ENCODE measurements at regions of chr5 and their contacts with region 1.

Region 1: DNA sequence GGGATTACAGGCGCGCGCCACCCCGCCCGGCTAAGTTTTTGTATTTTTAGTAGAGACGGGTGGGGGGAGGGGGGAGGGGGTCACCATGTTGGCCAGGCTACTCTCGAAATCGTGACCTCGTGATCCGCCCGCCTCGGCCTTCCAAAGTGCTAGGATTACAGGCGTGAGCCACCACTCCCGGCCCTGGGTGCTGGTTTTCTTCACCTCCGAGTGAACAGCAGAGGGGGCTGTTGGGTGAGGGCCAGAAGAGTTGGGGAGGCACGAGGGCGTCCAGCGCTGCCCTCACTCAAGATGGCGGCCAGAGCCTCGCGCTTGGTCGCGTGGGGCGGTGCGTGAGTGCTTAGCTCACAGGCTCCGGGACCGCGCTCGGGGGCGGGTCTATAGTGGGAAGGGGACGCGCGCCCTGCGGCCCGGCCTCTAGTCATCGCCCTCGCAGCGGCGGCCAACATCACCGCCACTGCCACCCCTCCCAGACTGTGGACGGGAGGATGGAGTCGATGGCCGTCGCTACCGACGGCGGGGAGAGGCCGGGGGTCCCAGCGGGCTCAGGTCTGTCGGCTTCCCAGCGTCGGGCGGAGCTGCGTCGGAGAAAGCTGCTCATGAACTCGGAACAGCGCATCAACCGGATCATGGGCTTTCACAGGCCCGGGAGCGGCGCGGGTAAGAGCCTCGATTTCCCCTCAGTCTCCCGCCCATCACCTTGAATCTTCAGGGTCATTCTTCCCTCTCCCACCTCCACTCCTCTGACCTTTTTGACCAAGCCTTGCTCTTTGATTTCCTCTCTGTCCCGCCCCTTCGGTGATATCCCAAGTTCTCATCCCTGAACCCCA is at the start of gene CAMLG:
- DNase-seq: peak; percentile 91 to 97
- H3K4me3 ChIP-seq: peak within 1 kb of the TSS; percentile 72
- H3K27ac ChIP-seq: peak within 1 kb of the TSS; percentile 83
- H3K4me1 ChIP-seq: peaks cover 14% of the 10 kb centered on the region
- H3K27me3 ChIP-seq: no peaks in the 10 kb centered on the region
- CTCF ChIP-seq: peak; percentile 70
- total RNA-seq, gene CAMLG: 24.4 and 28.0 TPM in 2 replicates

Region 2: GRCh38 chr5:133287500-133287899 is 1450.8 kb before region 1 on chr5:
- CTCF ChIA-PET with region 1: no interaction called
- POLR2A ChIA-PET with region 1: no interaction called
- intact Hi-C with region 1: no loop called
- DNase-seq: no peak
- H3K4me3 ChIP-seq: no peak overlapping the region
- H3K27ac ChIP-seq: no peak overlapping the region
- H3K4me1 ChIP-seq: peaks cover 66% of the 10 kb centered on the region
- H3K27me3 ChIP-seq: no peaks in the 10 kb centered on the region
- CTCF ChIP-seq: peak; percentile 60

Region 3: DNA sequence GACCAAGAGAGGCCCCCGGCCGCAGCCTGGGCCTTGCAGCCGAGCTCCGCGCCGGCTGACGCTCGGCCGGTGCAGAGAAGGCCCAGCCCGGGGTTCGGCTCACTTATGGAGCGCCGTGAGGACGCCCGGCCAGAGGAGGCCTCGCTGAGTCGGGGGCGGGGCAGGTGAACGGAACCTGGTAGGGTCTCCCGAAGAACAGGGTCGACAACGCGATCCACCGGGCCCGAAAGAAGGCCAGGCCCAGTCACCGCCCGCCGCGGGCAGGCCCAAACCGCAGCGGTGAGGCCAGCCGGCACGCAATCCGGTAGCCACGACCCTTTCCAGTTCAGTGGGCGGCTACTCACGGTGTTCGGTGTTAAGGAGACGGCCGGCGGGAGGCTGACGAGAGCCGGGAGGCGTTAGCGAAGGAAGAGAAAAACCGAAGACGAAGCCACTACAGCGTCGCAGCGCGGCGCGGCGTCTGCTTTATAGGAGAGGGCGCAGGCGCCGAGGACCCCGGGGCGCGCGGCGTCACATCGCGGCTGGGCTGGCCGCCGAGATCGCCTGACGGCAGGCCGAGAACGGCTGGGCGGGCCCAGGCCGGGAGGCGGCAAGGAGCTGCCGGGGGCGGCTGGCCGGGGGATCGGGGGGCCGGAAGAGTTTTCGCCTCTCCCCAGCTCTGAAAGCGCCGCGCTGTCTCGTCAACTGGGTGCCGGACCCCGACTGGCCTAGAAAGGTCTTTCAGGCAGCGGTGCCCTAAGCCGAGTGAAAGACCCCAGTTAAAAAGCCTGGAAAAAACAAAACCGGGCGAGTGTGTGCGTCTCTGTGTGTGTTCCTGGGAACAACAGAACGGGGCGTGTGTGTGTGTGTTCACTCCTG is 561.6 kb before region 1 on chr5 and contains the start of gene SKP1:
- CTCF ChIA-PET with region 1: no interaction called
- POLR2A ChIA-PET with region 1: no interaction called
- intact Hi-C with region 1: loop called (anchors 5 kb)
- DNase-seq: peak; percentile 59 to 84
- H3K4me3 ChIP-seq: peak within 1 kb of the TSS; percentile 93
- H3K27ac ChIP-seq: peak within 1 kb of the TSS; percentile 93
- H3K4me1 ChIP-seq: peaks cover 23% of the 10 kb centered on the region
- H3K27me3 ChIP-seq: no peaks in the 10 kb centered on the region
- CTCF ChIP-seq: no peak
- total RNA-seq, gene SKP1: 335 and 409 TPM in 2 replicates

Region 4: GRCh38 chr5:134304311-134304710 is 434.0 kb before region 1 on chr5:
- CTCF ChIA-PET with region 1: interaction called, 4 read pairs
- POLR2A ChIA-PET with region 1: no interaction called
- intact Hi-C with region 1: loop called (anchors 5 kb)
- DNase-seq: no peak
- H3K4me3 ChIP-seq: no peak overlapping the region
- H3K27ac ChIP-seq: no peak overlapping the region
- H3K4me1 ChIP-seq: no peaks in the 10 kb centered on the region
- H3K27me3 ChIP-seq: no peaks in the 10 kb centered on the region
- CTCF ChIP-seq: no peak

Region 5: GRCh38 chr5:134586866-134587524 is 151.4 kb before region 1 on chr5:
- CTCF ChIA-PET with region 1: interaction called, 3 read pairs
- POLR2A ChIA-PET with region 1: no interaction called
- intact Hi-C with region 1: loop called (anchors 2 kb)
- DNase-seq: peak; percentile 77 to 80
- H3K4me3 ChIP-seq: no peak overlapping the region
- H3K27ac ChIP-seq: no peak overlapping the region
- H3K4me1 ChIP-seq: peaks cover 19% of the 10 kb centered on the region
- H3K27me3 ChIP-seq: no peaks in the 10 kb centered on the region
- CTCF ChIP-seq: peak; percentile 86

Region 6: GRCh38 chr5:134724872-134725271 is 13.5 kb before region 1 on chr5:
- CTCF ChIA-PET with region 1: interaction called, 10 read pairs
- POLR2A ChIA-PET with region 1: no interaction called
- intact Hi-C with region 1: no loop called
- DNase-seq: no peak
- H3K4me3 ChIP-seq: no peak overlapping the region
- H3K27ac ChIP-seq: no peak overlapping the region
- H3K4me1 ChIP-seq: no peaks in the 10 kb centered on the region
- H3K27me3 ChIP-seq: no peaks in the 10 kb centered on the region
- CTCF ChIP-seq: no peak

Region 7: DNA sequence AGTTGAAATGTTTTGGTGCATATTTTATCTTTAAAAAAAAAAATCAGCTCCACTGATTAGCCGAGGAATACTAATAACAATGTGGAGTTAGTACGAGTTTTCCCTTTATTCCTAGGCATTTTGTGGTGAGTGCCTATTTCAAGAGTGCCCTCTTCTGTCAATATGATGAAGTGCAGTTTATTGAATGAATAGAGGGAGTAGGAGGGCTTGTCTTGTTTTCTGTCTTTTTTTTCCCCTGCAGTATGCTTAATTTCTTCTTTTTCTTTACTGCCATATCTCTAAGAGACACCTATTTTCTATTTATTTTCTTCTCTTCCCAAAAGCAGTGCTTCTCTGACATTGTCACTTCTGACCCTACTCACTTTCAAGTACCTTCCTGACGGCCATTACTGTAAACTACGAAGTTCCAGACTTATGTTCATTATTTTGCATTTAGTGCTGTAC is 465.3 kb after region 1 on chr5:
- CTCF ChIA-PET with region 1: no interaction called
- POLR2A ChIA-PET with region 1: no interaction called
- intact Hi-C with region 1: loop called (anchors 5 kb)
- DNase-seq: peak in 1 of 2 experiments; percentile 46
- H3K4me3 ChIP-seq: no peak overlapping the region
- H3K27ac ChIP-seq: no peak overlapping the region
- H3K4me1 ChIP-seq: peaks cover 16% of the 10 kb centered on the region
- H3K27me3 ChIP-seq: no peaks in the 10 kb centered on the region
- CTCF ChIP-seq: peak; percentile 66

Measured in PC-9 (cell line).